Naive thymus-derived CD4-positive, alpha-beta T cell (primary cell): ENCODE measurements at regions of chr12 and their contacts with region 1.

Region 1: GRCh38 chr12:95217377-95218149 is at the starts of genes FGD6 and VEZT:
- DNase-seq: peak; percentile 90 to 99 (median 98)
- ATAC-seq: peak; percentile 94
- H3K4me3 ChIP-seq: peak within 1 kb of the TSS; percentile 87
- H3K4me3 Mint-ChIP-seq: peak within 1 kb of the TSS; percentile 88 to 100 (median 96)
- H3K27ac ChIP-seq: peak within 1 kb of the TSS; percentile 94
- H3K27ac Mint-ChIP-seq: peak within 1 kb of the TSS; percentile 86 to 97 (median 95)
- H3K4me1 ChIP-seq: peaks cover 0 to 8% of the 10 kb centered on the region in 2 donors
- H3K4me1 Mint-ChIP-seq: peaks cover 25 to 53% (median 45%) of the 10 kb centered on the region in 7 donors
- H3K27me3 ChIP-seq: no peaks in the 10 kb centered on the region
- H3K27me3 Mint-ChIP-seq: peaks cover 0 to 20% (median 7%) of the 10 kb centered on the region in 5 donors
- total RNA-seq, gene FGD6: 0.70 to 8.6 (median 1.1) TPM
- total RNA-seq, gene VEZT: 37.2 to 48.8 (median 44.2) TPM

Region 2: GRCh38 chr12:93467351-93468007 is 1750.1 kb before region 1 on chr12 and contains the start of gene MRPL42:
- CTCF ChIA-PET with region 1: no interaction called
- POLR2A ChIA-PET with region 1: no interaction called
- intact Hi-C with region 1: loop called in 1 of 2 experiments (anchors 1 kb)
- DNase-seq: peak; percentile 86 to 96 (median 94)
- ATAC-seq: peak; percentile 97
- H3K4me3 ChIP-seq: peak within 1 kb of the TSS; percentile 94
- H3K4me3 Mint-ChIP-seq: peak within 1 kb of the TSS; percentile 85 to 96 (median 93)
- H3K27ac ChIP-seq: peak within 1 kb of the TSS; percentile 85
- H3K27ac Mint-ChIP-seq: peak within 1 kb of the TSS; percentile 90 to 98 (median 95)
- H3K4me1 ChIP-seq: peaks cover 8 to 10% of the 10 kb centered on the region in 2 donors
- H3K4me1 Mint-ChIP-seq: peaks cover 28 to 48% (median 36%) of the 10 kb centered on the region in 7 donors
- H3K27me3 ChIP-seq: no peaks in the 10 kb centered on the region
- H3K27me3 Mint-ChIP-seq: no peaks in the 10 kb centered on the region
- total RNA-seq, gene MRPL42: 30.1 to 65.8 (median 45.6) TPM

Region 3: GRCh38 chr12:94621664-94622359 is 595.8 kb before region 1 on chr12:
- CTCF ChIA-PET with region 1: no interaction called
- POLR2A ChIA-PET with region 1: no interaction called
- intact Hi-C with region 1: loop called in 1 of 2 experiments (anchors 10 kb)
- DNase-seq: peak in 4 of 9 donors; percentile 10 to 29 (median 15)
- ATAC-seq: peak; percentile 86
- H3K4me3 ChIP-seq: peak overlapping the region; percentile 40
- H3K4me3 Mint-ChIP-seq: peak overlapping the region; percentile 65 to 87 (median 77)
- H3K27ac ChIP-seq: no peak overlapping the region
- H3K27ac Mint-ChIP-seq: peak overlapping the region in 8 of 9 donors; percentile 37 to 88 (median 69)
- H3K4me1 ChIP-seq: peaks cover 6 to 7% of the 10 kb centered on the region in 2 donors
- H3K4me1 Mint-ChIP-seq: peaks cover 10 to 20% (median 16%) of the 10 kb centered on the region in 7 donors
- H3K27me3 ChIP-seq: no peaks in the 10 kb centered on the region
- H3K27me3 Mint-ChIP-seq: no peaks in the 10 kb centered on the region

Region 4: GRCh38 chr12:95102916-95103671 is 114.5 kb before region 1 on chr12:
- CTCF ChIA-PET with region 1: no interaction called
- POLR2A ChIA-PET with region 1: no interaction called
- intact Hi-C with region 1: loop called in 1 of 2 experiments (anchors 2 kb)
- DNase-seq: peak in 1 of 9 donors; percentile 38
- ATAC-seq: peak; percentile 64
- H3K4me3 ChIP-seq: no peak overlapping the region
- H3K4me3 Mint-ChIP-seq: peak overlapping the region in 1 of 10 donors; percentile 46
- H3K27ac ChIP-seq: no peak overlapping the region
- H3K27ac Mint-ChIP-seq: peak overlapping the region in 3 of 9 donors; percentile 26 to 70 (median 32)
- H3K4me1 ChIP-seq: no peaks in the 10 kb centered on the region
- H3K4me1 Mint-ChIP-seq: peaks cover 0 to 13% (median 0%) of the 10 kb centered on the region in 7 donors
- H3K27me3 ChIP-seq: no peaks in the 10 kb centered on the region
- H3K27me3 Mint-ChIP-seq: peaks cover 0 to 3% (median 0%) of the 10 kb centered on the region in 5 donors

Region 5: GRCh38 chr12:95473884-95474659 is 256.5 kb after region 1 on chr12 and contains the start of gene METAP2:
- CTCF ChIA-PET with region 1: interaction called, 3 read pairs
- POLR2A ChIA-PET with region 1: interaction called, 25 read pairs
- intact Hi-C with region 1: loop called (anchors 1 kb)
- DNase-seq: peak; percentile 75 to 93 (median 87)
- ATAC-seq: peak; percentile 98
- H3K4me3 ChIP-seq: peak within 1 kb of the TSS; percentile 81
- H3K4me3 Mint-ChIP-seq: peak within 1 kb of the TSS; percentile 96 to 100 (median 99)
- H3K27ac ChIP-seq: peak within 1 kb of the TSS; percentile 92
- H3K27ac Mint-ChIP-seq: peak within 1 kb of the TSS; percentile 95 to 100 (median 99)
- H3K4me1 ChIP-seq: peaks cover 10 to 39% of the 10 kb centered on the region in 2 donors
- H3K4me1 Mint-ChIP-seq: peaks cover 31 to 70% (median 55%) of the 10 kb centered on the region in 7 donors
- H3K27me3 ChIP-seq: no peaks in the 10 kb centered on the region
- H3K27me3 Mint-ChIP-seq: no peaks in the 10 kb centered on the region
- total RNA-seq, gene METAP2: 48.2 to 79.9 (median 57.3) TPM

Region 6: DNA sequence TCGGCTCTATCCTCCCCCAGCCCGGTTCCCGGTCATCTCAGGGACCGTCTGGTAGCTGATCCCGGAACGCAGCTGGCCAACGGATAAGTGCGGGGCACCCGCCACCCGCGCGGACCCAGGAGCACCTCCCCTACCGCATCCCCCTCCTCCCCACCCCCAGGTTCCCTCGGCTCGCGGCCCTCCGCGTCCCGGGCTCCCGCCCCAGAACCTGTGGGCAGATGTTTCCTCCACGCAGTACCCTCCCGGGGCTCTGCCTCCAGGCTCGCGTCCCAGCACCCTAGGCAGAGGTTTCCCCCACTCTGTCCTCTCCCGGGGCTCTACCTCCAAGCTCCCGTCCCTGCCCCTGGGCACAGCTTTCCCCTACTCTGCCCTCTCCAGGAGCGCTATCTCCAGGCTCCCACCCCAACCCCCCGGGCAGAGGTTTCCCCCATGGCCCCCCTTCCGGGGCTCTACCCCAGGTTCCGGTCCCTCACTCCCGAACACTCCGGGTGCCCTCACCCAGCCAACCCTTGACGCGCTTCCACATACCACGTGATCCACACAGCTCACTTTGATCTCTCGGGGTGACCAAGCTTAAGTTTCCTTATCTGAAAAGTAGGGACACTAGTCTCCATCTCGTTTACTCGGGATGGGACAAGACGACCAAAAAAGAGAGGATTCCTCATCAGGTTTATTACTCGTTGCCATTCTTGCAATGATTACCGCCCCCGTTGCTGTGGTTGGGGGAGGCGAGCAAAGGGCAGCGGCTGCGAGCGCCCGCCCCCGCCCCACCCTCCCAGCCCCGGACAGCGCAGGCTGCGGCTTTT is 725.2 kb after region 1 on chr12 and contains the start of gene CCDC38:
- CTCF ChIA-PET with region 1: no interaction called
- POLR2A ChIA-PET with region 1: interaction called, 3 read pairs
- intact Hi-C with region 1: loop called in 1 of 2 experiments (anchors 2 kb)
- DNase-seq: peak; percentile 56 to 86 (median 82)
- ATAC-seq: peak; percentile 97
- H3K4me3 ChIP-seq: peak within 1 kb of the TSS; percentile 93
- H3K4me3 Mint-ChIP-seq: peak within 1 kb of the TSS; percentile 88 to 99 (median 96)
- H3K27ac ChIP-seq: peak within 1 kb of the TSS; percentile 86
- H3K27ac Mint-ChIP-seq: peak within 1 kb of the TSS; percentile 85 to 97 (median 89)
- H3K4me1 ChIP-seq: peaks cover 6% of the 10 kb centered on the region in 2 donors
- H3K4me1 Mint-ChIP-seq: peaks cover 4 to 12% (median 10%) of the 10 kb centered on the region in 7 donors
- H3K27me3 ChIP-seq: no peaks in the 10 kb centered on the region
- H3K27me3 Mint-ChIP-seq: peaks cover 0 to 26% (median 0%) of the 10 kb centered on the region in 5 donors
- total RNA-seq, gene CCDC38: 0.07 to 0.27 TPM in 2 of 5 experiments, not detected in the others